Astrocyte of the cerebellum (primary cell): ENCODE measurements at regions of chr4 and their contacts with region 1.

Region 1: GRCh38 chr4:76373919-76374552 is 46.9 kb downstream of the CCDC158 start:
- DNase-seq: no peak
- H3K4me3 ChIP-seq: no peak overlapping the region
- CTCF ChIP-seq: no peak

Region 2: DNA sequence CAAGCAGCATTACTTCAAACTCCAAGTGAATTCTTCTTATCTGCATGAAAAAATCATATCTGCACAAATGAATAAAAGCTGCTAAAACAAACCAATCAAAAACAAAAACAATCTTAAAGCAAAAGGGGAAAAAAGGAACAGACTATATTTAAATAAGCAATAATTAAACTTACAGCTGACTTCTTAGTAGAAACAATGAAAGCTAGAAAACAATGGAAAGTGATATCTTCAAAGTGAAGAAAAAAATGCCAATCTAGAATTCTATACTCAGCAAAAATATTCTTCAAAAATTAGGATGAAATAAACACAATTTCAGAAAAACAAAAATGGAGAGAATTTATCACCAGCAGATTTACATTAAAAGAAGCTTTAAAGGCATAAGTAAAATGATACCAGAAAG is 47.5 kb before region 1 on chr4:
- in situ Hi-C with region 1: loop called (anchors 5 kb)
- DNase-seq: no peak
- H3K4me3 ChIP-seq: no peak overlapping the region
- CTCF ChIP-seq: no peak

Region 3: GRCh38 chr4:76407440-76408119 is 33.5 kb after region 1 on chr4:
- in situ Hi-C with region 1: no loop called
- DNase-seq: no peak
- H3K4me3 ChIP-seq: no peak overlapping the region
- CTCF ChIP-seq: no peak